HEK293 (cell line): ENCODE measurements at regions of chr22 and their contacts with region 1.

Region 1: GRCh38 chr22:36239401-36240171 is at the start of gene APOL2:
- H3K4me3 ChIP-seq: peak within 1 kb of the TSS; percentile 49
- H3K27ac ChIP-seq: peak within 1 kb of the TSS; percentile 63
- H3K4me1 ChIP-seq: peaks cover 9% of the 10 kb centered on the region
- CTCF ChIP-seq: peak; percentile 90

Region 2: DNA sequence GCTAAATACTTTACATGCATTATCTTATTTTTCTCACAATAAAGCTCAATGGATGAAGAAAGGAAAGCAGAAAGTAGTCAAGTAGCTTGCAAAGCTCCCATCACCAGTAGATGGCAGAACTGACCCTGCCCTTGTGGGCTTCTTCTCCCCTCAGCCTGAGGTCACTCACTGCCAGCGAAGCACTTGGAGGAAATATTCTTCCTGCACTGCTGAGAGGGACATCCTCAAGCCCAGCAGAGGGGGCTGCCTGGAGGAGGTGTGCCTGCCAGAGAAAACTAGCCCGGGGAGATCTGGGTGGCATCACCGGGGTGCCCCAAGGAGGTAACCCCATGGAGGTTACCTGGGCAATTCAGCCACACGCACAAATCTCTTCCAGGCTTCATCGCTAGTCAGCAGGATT is 44.6 kb before region 1 on chr22:
- CTCF ChIA-PET with region 1: interaction called, 13 read pairs
- POLR2A ChIA-PET with region 1: interaction called, 3 read pairs
- H3K4me3 ChIP-seq: no peak overlapping the region
- H3K27ac ChIP-seq: no peak overlapping the region
- H3K4me1 ChIP-seq: no peaks in the 10 kb centered on the region
- CTCF ChIP-seq: peak; percentile 73

Region 3: DNA sequence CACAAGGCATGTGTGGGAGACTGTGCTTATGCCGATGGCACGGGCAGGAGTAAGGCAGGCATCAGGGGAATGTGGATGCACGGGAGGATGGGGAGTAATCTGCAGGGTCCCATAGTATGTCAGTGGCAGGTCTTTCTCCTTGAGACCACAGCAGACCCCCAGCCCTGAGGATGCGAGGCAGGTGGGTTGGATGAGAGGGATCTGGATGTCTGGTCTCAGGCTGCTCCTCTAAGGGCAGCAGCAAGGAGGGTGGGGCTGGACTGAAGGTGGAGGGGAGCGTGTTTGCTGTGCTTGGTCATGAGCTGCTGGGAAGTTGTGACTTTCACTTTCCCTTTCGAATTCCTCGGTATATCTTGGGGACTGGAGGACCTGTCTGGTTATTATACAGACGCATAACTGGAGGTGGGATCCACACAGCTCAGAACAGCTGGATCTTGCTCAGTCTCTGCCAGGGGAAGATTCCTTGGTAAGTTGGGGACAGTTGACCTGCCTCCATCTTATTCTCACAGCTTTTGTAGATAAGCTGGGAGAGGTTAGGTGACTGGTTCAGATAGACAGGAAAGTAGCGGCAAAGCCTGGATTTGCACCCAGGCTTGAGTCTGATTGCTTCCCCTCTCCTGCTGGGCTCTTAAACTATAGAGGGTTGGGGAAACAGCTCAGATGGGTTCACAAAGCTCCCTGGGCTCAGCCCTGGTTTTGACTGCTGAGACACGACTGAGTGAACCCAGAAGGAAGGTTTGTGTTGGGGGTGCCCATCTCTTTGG is 13.3 kb after region 1 on chr22 and contains the start of gene APOL1:
- CTCF ChIA-PET with region 1: interaction called, 13 read pairs
- POLR2A ChIA-PET with region 1: interaction called, 4 read pairs
- H3K4me3 ChIP-seq: no peak within 1 kb of the TSS
- H3K27ac ChIP-seq: no peak within 1 kb of the TSS
- H3K4me1 ChIP-seq: no peaks in the 10 kb centered on the region
- CTCF ChIP-seq: no peak

Region 4: GRCh38 chr22:36258701-36259614 is 19.4 kb after region 1 on chr22:
- CTCF ChIA-PET with region 1: interaction called, 11 read pairs
- POLR2A ChIA-PET with region 1: no interaction called
- H3K4me3 ChIP-seq: no peak overlapping the region
- H3K27ac ChIP-seq: no peak overlapping the region
- H3K4me1 ChIP-seq: no peaks in the 10 kb centered on the region
- CTCF ChIP-seq: no peak

Region 5: DNA sequence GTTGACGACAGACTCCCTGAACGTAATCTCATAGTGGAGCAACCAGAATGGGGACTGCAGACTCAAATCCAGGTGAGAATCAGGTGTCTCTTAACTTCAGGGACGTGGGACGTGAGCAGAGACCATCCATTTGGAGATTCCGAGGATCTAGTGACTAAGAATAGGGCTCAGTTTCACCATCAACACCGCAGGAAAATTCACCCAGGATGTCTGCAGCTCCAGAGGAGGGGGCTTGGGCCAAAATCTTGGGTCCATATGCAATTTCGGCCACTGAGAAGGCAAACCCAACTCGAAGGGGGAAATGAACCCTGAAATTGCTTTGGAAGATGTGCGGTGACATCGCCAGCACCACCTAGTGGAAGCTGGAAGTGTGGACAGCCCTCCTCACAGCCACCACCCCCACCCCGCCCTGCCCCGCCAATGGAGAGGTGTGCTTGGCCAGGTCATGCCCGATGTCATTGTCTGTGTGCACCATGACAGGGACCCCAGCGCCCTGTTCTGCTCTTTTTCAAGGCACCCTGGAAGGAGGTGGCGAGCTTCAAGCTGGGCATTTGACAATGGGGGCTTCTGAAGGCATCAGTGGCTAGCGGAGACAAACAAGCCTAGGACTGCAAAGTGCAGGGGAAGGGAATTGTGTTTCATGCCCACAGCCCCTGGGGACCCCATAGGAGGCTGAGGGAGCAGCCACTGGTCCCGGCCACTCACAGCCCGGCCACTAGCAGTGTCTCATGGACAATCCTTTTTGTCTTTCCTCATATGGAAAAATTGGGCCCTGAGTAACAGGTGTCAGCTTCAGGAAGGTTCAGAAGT is 38.1 kb after region 1 on chr22:
- CTCF ChIA-PET with region 1: interaction called, 18 read pairs
- POLR2A ChIA-PET with region 1: interaction called, 8 read pairs
- H3K4me3 ChIP-seq: no peak overlapping the region
- H3K27ac ChIP-seq: no peak overlapping the region; the same call in 1 of the 2 replicates
- H3K4me1 ChIP-seq: no peaks in the 10 kb centered on the region
- CTCF ChIP-seq: peak; percentile 54

Region 6: DNA sequence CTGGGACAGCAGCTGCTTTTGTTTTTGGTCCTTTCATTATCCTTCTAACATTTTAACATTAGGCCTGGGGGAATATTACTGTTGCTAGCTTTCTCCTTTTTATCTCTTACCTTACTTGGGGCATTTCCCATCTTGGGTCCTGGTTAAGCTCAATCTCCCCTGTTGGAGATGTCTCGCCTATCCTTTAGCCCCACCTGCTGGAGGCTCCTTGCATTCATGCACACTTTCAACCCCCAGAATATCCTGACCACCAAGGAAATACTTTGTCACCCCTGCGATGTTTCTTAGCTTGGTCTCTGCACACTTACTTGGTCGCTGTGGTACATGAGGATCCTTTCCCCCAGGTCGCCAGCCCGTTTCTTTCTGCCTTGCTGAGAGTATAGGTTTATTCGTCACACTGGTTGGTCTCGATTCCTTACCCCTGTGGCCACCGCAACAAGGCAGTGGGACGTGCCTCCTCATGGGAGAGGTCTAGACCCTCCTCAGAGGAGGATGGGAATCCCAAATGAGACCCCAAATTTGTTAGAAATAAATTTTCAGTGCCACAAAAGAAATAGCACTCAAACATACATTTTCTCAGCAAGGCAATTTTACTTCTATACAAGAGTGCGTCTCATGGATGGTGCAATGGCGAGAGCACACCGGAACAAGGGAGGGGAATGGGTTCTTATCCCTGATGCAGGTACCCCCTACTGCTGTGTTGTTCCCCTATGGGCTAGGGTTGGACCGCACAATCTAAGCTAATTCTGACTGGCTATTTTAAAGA is 247.2 kb after region 1 on chr22:
- CTCF ChIA-PET with region 1: interaction called, 15 read pairs
- POLR2A ChIA-PET with region 1: interaction called, 8 read pairs
- H3K4me3 ChIP-seq: no peak overlapping the region
- H3K27ac ChIP-seq: no peak overlapping the region
- H3K4me1 ChIP-seq: no peaks in the 10 kb centered on the region; the same call in 1 of the 2 replicates
- CTCF ChIP-seq: peak; percentile 79